Activated CD4-positive, alpha-beta T cell treated with anti-CD3 and anti-CD28 coated beads for 36 hours (primary cell): ENCODE measurements at regions of chr7 and their contacts with region 1.

Region 1: GRCh38 chr7:140230861-140231770 is 54.3 kb upstream of the KDM7A start:
- DNase-seq: peak; percentile 86
- ATAC-seq: peak; percentile 65
- H3K4me3 Mint-ChIP-seq: peak overlapping the region; percentile 99
- H3K27ac Mint-ChIP-seq: peak overlapping the region; percentile 99
- H3K4me1 Mint-ChIP-seq: peaks cover 45% of the 10 kb centered on the region
- H3K27me3 Mint-ChIP-seq: no peaks in the 10 kb centered on the region

Region 2: GRCh38 chr7:139669106-139670061 is 561.7 kb before region 1 on chr7:
- CTCF ChIA-PET with region 1: no interaction called
- POLR2A ChIA-PET with region 1: no interaction called
- intact Hi-C with region 1: no loop called
- DNase-seq: peak; percentile 51
- ATAC-seq: peak; percentile 54
- H3K4me3 Mint-ChIP-seq: peak overlapping the region; percentile 20
- H3K27ac Mint-ChIP-seq: peak overlapping the region; percentile 89
- H3K4me1 Mint-ChIP-seq: peaks cover 44% of the 10 kb centered on the region
- H3K27me3 Mint-ChIP-seq: no peaks in the 10 kb centered on the region

Region 3: DNA sequence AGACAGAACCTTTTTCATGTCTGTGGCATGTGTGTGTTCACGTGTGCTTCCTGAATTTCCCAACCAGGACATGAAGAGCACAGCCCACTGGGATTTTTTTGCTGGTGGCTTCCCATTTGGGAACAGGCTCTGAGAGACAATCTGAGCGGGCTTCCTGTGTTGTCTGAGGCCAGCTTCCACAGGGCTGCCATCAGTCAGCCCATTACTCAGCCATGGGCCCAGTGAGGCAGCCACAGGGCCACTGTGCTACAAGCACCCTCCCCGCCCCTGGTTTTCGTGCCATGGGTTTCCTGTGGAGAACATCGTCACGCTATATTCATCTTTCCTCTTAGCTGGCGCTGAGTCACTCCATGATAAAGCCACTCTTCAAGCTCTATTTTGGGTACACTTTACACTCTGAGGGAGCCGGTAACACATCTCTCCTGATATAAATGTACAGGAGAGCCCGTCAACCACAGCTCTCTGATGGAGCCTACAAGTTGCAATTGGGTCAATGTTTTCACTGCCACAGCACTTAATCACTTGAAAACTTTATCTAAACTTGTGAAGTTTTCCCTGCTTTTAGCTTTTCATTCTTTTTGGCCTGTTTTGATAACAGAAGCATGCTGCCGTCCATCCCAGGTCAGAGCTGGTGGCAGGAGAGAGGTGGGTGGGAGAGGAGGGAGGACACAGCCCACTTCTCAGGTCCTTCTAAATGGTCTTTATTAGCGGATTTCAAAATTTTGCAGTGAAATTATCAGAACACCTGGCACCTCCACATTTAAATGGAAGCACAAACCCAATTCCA is 550.2 kb before region 1 on chr7:
- CTCF ChIA-PET with region 1: no interaction called
- POLR2A ChIA-PET with region 1: no interaction called
- intact Hi-C with region 1: loop called in 1 of 2 experiments (anchors 5 kb)
- DNase-seq: peak; percentile 94
- ATAC-seq: peak; percentile 73
- H3K4me3 Mint-ChIP-seq: peak overlapping the region; percentile 68
- H3K27ac Mint-ChIP-seq: peak overlapping the region; percentile 98
- H3K4me1 Mint-ChIP-seq: peaks cover 53% of the 10 kb centered on the region
- H3K27me3 Mint-ChIP-seq: no peaks in the 10 kb centered on the region

Region 4: DNA sequence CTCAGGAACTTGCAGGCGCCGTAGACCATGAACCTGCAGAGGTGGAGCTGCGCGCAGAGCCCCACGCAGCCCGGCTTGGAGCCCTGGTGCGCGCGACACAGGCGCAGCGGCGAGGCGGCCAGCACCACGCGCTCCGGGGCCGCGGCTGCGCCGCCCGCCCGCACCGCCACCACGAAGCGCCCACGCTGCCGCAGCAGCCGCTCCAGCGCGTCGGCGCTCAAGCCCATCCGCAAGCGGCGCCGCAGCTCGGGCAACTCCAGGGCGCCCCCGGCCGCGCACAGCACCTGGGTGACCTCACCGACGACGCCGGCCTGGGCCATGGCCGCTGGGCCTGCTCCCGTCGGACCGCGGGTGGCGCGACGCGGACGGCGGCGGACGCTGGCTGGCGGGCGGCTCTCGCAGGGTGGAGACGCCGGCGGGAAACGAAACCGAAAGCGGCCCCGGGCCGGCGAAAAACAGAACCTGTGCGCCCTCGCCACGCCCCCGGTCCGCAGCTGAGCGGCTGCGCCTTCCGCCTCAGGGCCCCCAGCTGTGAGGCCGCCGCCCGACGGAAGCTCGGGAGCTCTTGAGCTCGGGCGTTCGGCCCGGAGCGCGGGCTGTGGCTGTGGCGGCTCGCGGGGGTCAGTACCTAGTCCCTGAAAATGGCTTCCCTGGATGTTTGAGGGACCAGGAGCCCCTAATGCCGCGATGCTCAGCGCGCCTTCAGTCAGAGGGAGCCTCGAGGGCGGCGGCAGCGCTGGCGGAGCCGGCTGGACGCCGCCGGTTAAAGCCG is 168.4 kb before region 1 on chr7 and contains the start of gene PARP12:
- CTCF ChIA-PET with region 1: interaction called, 3 read pairs
- POLR2A ChIA-PET with region 1: interaction called, 4 read pairs
- intact Hi-C with region 1: loop called in 1 of 2 experiments (anchors 1 kb)
- DNase-seq: peak; percentile 91
- ATAC-seq: peak; percentile 65
- H3K4me3 Mint-ChIP-seq: peak within 1 kb of the TSS; percentile 78
- H3K27ac Mint-ChIP-seq: peak within 1 kb of the TSS; percentile 75
- H3K4me1 Mint-ChIP-seq: peaks cover 36% of the 10 kb centered on the region
- H3K27me3 Mint-ChIP-seq: no peaks in the 10 kb centered on the region
- total RNA-seq, gene PARP12: 25.7 to 28.7 TPM

Region 5: GRCh38 chr7:140249036-140249806 is 18.1 kb after region 1 on chr7:
- CTCF ChIA-PET with region 1: no interaction called
- POLR2A ChIA-PET with region 1: no interaction called
- intact Hi-C with region 1: loop called (anchors 2 kb)
- DNase-seq: no peak
- ATAC-seq: no peak
- H3K4me3 Mint-ChIP-seq: no peak overlapping the region
- H3K27ac Mint-ChIP-seq: no peak overlapping the region
- H3K4me1 Mint-ChIP-seq: peaks cover 20% of the 10 kb centered on the region
- H3K27me3 Mint-ChIP-seq: no peaks in the 10 kb centered on the region

Region 6: GRCh38 chr7:140375892-140376730 is 145.0 kb after region 1 on chr7:
- CTCF ChIA-PET with region 1: no interaction called
- POLR2A ChIA-PET with region 1: no interaction called
- intact Hi-C with region 1: loop called in 1 of 2 experiments (anchors 1 kb)
- DNase-seq: peak; percentile 45
- ATAC-seq: peak; percentile 90
- H3K4me3 Mint-ChIP-seq: peak overlapping the region; percentile 57
- H3K27ac Mint-ChIP-seq: peak overlapping the region; percentile 95
- H3K4me1 Mint-ChIP-seq: peaks cover 53% of the 10 kb centered on the region
- H3K27me3 Mint-ChIP-seq: no peaks in the 10 kb centered on the region